HCT116 (cell line): ENCODE measurements at regions of chr1 and their contacts with region 1.

Region 1: GRCh38 chr1:155050560-155051341 is at the start of gene ADAM15:
- DNase-seq: peak; percentile 54
- ATAC-seq: peak; percentile 78
- H3K4me3 ChIP-seq: peak within 1 kb of the TSS; percentile 90 to 94
- H3K27ac ChIP-seq: peak within 1 kb of the TSS; percentile 93
- H3K4me1 ChIP-seq: peaks cover 13 to 41% of the 10 kb centered on the region in 2 experiments
- H3K27me3 ChIP-seq: no peaks in the 10 kb centered on the region
- CTCF ChIP-seq: peak in 2 of 3 experiments; percentile 93 to 94; a peak in 4 of 6 replicates
- POLR2A ChIP-seq: no peak
- RAD21 ChIP-seq: no peak
- total RNA-seq, gene ADAM15: 149 TPM

Region 2: GRCh38 chr1:154453574-154454352 is 597.0 kb before region 1 on chr1:
- CTCF ChIA-PET with region 1: no interaction called
- POLR2A ChIA-PET with region 1: no interaction called
- RAD21 ChIA-PET with region 1: no interaction called
- intact Hi-C with region 1: no loop called
- DNase-seq: no peak
- ATAC-seq: no peak
- H3K4me3 ChIP-seq: no peak overlapping the region
- H3K27ac ChIP-seq: no peak overlapping the region
- H3K4me1 ChIP-seq: peaks cover 6 to 10% of the 10 kb centered on the region in 2 experiments; a peak in 2 of 4 replicates
- H3K27me3 ChIP-seq: no peaks in the 10 kb centered on the region
- CTCF ChIP-seq: no peak
- POLR2A ChIP-seq: no peak
- RAD21 ChIP-seq: no peak

Region 3: DNA sequence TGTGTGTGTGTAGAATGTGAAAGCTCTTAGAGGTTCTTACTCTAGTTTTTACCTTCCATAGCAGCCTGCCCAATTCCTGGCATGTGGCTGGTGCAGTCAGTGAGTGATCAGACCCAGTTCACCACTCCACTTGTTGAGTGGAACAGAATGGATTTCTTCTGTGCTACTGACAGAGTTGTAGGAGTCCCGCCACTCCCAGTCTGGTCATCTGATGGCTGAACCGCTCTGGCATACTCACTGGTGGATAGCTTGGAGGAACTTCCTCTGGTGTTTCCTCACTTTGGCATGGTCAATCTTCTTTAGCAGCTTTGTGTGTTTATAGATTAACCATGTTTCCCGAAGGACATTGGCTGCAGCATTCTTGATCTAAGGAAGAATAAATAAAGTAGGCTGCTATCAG is 336.1 kb before region 1 on chr1:
- CTCF ChIA-PET with region 1: no interaction called
- POLR2A ChIA-PET with region 1: no interaction called
- RAD21 ChIA-PET with region 1: no interaction called
- intact Hi-C with region 1: no loop called
- DNase-seq: no peak
- ATAC-seq: peak; percentile 34; the same call in 1 of the 2 replicates
- H3K4me3 ChIP-seq: no peak overlapping the region
- H3K27ac ChIP-seq: no peak overlapping the region
- H3K4me1 ChIP-seq: no peaks in the 10 kb centered on the region
- H3K27me3 ChIP-seq: no peaks in the 10 kb centered on the region
- CTCF ChIP-seq: no peak
- POLR2A ChIP-seq: no peak
- RAD21 ChIP-seq: no peak

Region 4: GRCh38 chr1:155063550-155064110 is 12.9 kb after region 1 on chr1 and contains the start of gene EFNA4:
- CTCF ChIA-PET with region 1: interaction called, 15 read pairs
- POLR2A ChIA-PET with region 1: interaction called, 5 read pairs
- RAD21 ChIA-PET with region 1: interaction called in 1 of 2 experiments, 8 read pairs
- intact Hi-C with region 1: no loop called
- DNase-seq: peak; percentile 79
- ATAC-seq: peak; percentile 79
- H3K4me3 ChIP-seq: peak within 1 kb of the TSS; percentile 77 to 84
- H3K27ac ChIP-seq: peak within 1 kb of the TSS; percentile 93
- H3K4me1 ChIP-seq: peaks cover 21 to 35% of the 10 kb centered on the region in 2 experiments
- H3K27me3 ChIP-seq: no peaks in the 10 kb centered on the region
- CTCF ChIP-seq: no peak
- POLR2A ChIP-seq: peak; percentile 76
- RAD21 ChIP-seq: no peak
- total RNA-seq, gene EFNA4: 9.8 TPM

Region 5: DNA sequence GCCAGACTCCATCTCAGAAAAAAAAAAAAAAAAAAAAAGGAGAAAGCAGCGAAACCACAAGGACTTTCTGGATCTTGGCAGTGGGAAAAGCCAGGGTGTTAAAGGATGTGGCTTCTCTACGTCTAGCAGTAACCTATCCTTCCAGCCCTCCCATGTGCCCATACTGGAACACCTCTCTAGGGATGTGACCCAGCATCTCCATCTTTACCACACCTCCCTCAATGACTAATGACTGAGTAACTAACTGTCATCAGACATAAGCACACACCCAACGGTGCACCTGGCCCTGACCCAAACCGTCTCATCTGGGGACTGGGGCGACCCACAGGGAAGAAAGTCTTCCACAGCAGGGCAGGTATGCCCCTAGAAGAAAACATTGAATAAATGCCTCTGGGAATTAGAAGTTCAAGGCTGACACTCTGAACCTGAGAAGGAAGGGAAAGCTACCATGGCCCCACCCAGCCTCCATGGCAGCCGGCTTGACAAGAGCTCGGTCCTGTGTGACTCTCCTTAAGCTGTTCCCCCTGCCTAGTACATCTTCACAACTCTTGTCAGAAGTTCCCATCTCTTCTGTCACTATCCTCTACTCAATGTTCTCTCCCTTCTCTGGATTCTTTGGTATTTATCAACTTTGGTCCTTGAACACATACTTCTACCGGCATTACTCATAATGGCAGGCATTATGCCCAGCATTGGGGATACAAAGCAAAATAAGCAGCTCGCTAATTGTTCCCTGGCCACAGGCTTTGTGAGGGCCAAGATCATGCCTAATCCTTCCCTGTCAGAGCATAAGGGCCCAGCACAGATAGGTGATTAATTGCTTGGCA is 1211.9 kb after region 1 on chr1:
- CTCF ChIA-PET with region 1: no interaction called
- POLR2A ChIA-PET with region 1: no interaction called
- RAD21 ChIA-PET with region 1: no interaction called
- intact Hi-C with region 1: no loop called
- DNase-seq: no peak
- ATAC-seq: peak; percentile 79
- H3K4me3 ChIP-seq: no peak overlapping the region
- H3K27ac ChIP-seq: 0 out of 2 replicates have a peak overlapping the region, but pooled peaks have one; percentile 10
- H3K4me1 ChIP-seq: peaks cover 0 to 16% of the 10 kb centered on the region in 2 experiments; a peak in 2 of 4 replicates
- H3K27me3 ChIP-seq: no peaks in the 10 kb centered on the region
- CTCF ChIP-seq: no peak
- POLR2A ChIP-seq: no peak
- RAD21 ChIP-seq: no peak